ENCODE measurements at regions of chr10 and their contacts with region 1.

Region 1: DNA sequence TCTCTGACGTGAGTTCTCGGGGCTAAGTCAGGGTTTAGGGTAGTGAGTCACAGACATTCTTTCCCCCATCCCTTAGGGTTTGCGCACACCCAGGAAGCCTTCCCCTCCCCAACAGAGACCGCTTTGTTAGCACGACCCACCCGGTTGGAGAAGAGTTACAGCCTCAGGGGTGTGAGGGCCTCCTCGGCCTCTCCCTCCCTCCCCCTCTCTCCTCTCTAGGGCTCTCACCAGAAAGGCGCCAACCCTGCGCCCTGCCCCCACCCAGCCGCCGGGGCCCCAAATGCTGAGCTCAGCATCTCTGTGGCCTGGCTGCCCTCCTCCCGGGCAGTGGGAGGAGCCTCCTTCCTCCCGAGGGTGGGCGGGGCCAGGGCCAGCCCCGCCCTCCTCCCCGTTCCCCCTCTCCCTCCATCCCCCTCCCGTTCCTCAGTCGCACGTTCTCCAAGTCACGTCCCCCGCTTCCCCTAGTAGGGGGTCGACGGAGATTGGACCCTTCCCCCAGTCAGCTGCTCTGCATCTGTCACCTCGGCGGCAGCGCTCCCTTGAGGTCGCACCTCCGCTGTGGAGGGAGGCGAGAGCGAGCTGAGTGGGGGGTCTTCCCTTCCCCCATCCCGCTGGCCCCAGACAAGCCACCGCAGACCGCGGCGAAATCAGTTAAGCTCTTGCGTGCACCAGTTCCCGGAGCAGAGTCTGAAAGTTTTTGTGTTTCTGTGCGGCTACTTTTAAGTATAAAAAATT is 13.0 kb upstream of the DDIT4 start:
- DNase-seq: peak; percentile 88
- ATAC-seq: peak; percentile 80
- H3K4me3 ChIP-seq: peak overlapping the region; percentile 68
- H3K27ac ChIP-seq: peak overlapping the region; percentile 95
- H3K4me1 ChIP-seq: peaks cover 68% of the 10 kb centered on the region
- H3K27me3 ChIP-seq: no peaks in the 10 kb centered on the region
- CTCF ChIP-seq: peak in 2 of 3 experiments; percentile 15 to 39; a peak in 2 of 6 replicates
- EP300 ChIP-seq: no peak; a peak in 2 of 4 replicates
- POLR2A ChIP-seq: peak; percentile 77
- RAD21 ChIP-seq: peak; percentile 9; the same call in 1 of the 2 replicates

Region 2: GRCh38 chr10:72126184-72126871 is 134.4 kb before region 1 on chr10:
- CTCF ChIA-PET with region 1: interaction called, 10 read pairs
- POLR2A ChIA-PET with region 1: interaction called, 5 read pairs
- RAD21 ChIA-PET with region 1: interaction called, 46 read pairs
- SMC1A ChIA-PET with region 1: interaction called, 4 read pairs
- in situ Hi-C with region 1: no loop called
- intact Hi-C with region 1: no loop called
- DNase-seq: no peak
- ATAC-seq: peak; percentile 42
- H3K4me3 ChIP-seq: no peak overlapping the region
- H3K27ac ChIP-seq: no peak overlapping the region
- H3K4me1 ChIP-seq: no peaks in the 10 kb centered on the region
- H3K27me3 ChIP-seq: no peaks in the 10 kb centered on the region
- CTCF ChIP-seq: peak; percentile 13 to 46 (median 28); a peak in 4 of 6 replicates
- EP300 ChIP-seq: no peak
- POLR2A ChIP-seq: no peak
- RAD21 ChIP-seq: peak; percentile 57

Region 3: DNA sequence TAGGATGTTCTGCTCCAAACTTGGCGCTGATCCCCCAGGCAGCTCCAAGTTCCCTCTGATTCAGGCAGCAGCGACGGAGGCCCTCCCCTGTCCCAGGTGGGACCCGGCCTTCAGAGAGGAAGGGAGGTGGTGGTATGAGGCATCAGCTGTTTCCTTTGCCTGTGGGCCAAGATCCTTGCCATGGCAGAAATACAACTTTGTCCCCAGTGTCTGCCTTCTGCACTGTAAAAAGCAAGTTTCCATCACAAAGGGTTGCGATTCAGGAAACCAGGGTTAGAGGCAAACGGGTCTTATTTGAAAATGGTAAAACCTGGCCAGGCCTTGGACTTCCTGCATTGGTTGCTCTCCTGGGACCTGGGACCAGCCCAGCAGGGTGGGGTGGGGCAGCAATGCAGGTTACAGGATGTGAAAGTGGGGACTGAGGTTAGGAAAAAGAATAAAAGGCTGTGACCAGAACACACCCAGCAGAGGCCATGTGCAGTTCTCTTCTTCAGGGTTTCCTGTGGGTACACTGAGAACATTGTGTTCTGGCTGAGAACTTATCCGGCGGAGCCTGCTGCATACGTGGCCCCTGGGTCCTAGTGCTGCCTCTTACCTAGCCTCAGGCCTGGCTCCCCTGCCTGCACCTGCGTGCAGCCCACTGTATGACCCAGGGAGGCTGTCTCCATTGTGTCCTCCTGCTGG is 12.1 kb before region 1 on chr10:
- CTCF ChIA-PET with region 1: interaction called, 14 read pairs
- POLR2A ChIA-PET with region 1: interaction called, 113 read pairs
- RAD21 ChIA-PET with region 1: interaction called, 185 read pairs
- SMC1A ChIA-PET with region 1: interaction called, 115 read pairs
- in situ Hi-C with region 1: no loop called
- intact Hi-C with region 1: loop called (anchors 1 kb)
- DNase-seq: peak; percentile 99
- ATAC-seq: peak; percentile 95
- H3K4me3 ChIP-seq: peak overlapping the region; percentile 55; the same call in 1 of the 2 replicates
- H3K27ac ChIP-seq: peak overlapping the region; percentile 97
- H3K4me1 ChIP-seq: peaks cover 72% of the 10 kb centered on the region
- H3K27me3 ChIP-seq: no peaks in the 10 kb centered on the region
- CTCF ChIP-seq: no peak
- EP300 ChIP-seq: peak; percentile 88 to 91
- POLR2A ChIP-seq: peak; percentile 89
- RAD21 ChIP-seq: no peak

Region 4: GRCh38 chr10:72292223-72292691 is 31.5 kb after region 1 on chr10:
- CTCF ChIA-PET with region 1: interaction called, 5 read pairs
- POLR2A ChIA-PET with region 1: interaction called, 84 read pairs
- RAD21 ChIA-PET with region 1: interaction called, 61 read pairs
- SMC1A ChIA-PET with region 1: interaction called, 15 read pairs
- in situ Hi-C with region 1: no loop called
- intact Hi-C with region 1: loop called (anchors 1 kb)
- DNase-seq: no peak
- ATAC-seq: peak; percentile 8; the same call in 2 of the 3 replicates
- H3K4me3 ChIP-seq: no peak overlapping the region
- H3K27ac ChIP-seq: peak overlapping the region; percentile 54
- H3K4me1 ChIP-seq: peaks cover 49% of the 10 kb centered on the region
- H3K27me3 ChIP-seq: no peaks in the 10 kb centered on the region
- CTCF ChIP-seq: no peak
- EP300 ChIP-seq: no peak
- POLR2A ChIP-seq: no peak
- RAD21 ChIP-seq: no peak

Region 5: DNA sequence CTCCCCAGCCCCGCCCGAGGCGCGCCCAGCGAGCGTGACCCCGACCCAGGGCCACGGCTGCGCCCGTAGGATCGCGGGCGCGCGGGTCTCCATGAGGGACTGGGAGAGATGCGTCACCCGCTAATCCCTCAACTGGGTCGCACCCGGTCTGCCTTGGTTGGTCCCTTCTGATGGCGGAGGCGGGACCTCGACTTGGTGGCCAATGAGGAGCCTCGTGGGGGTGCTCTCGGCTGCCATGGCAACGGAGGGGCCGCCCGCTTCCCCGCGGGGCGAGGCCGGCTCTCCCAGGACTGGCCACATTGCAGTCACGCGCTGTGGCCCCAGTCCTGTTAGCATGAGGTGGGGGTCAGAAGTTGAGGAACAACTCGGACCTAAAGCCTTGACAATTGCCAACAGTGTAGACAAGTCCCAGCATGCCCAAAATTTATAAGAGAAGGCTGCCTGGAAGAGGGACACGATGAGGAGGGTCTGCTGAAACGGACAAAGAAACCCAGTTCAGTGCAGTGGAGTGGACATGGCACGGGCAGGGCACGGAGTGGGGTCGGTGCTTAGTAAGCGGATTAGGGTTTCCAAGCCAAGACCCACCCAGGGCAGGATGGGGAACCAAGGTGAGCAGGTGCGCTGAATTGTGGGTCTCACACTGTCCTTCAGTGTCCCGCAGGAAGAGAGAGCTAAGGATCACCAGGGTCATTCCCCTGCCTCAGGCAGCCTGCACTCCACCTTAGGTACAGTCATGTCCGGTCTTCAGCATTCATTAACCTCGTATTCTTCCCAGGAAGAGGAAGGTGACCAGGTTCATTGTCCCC is 37.4 kb after region 1 on chr10:
- CTCF ChIA-PET with region 1: interaction called, 5 read pairs
- POLR2A ChIA-PET with region 1: interaction called, 84 read pairs
- RAD21 ChIA-PET with region 1: interaction called, 61 read pairs
- SMC1A ChIA-PET with region 1: interaction called, 15 read pairs
- in situ Hi-C with region 1: no loop called
- intact Hi-C with region 1: loop called (anchors 1 kb)
- DNase-seq: peak; percentile 91
- ATAC-seq: peak; percentile 84
- H3K4me3 ChIP-seq: peak overlapping the region; percentile 80
- H3K27ac ChIP-seq: peak overlapping the region; percentile 100
- H3K4me1 ChIP-seq: peaks cover 40% of the 10 kb centered on the region
- H3K27me3 ChIP-seq: no peaks in the 10 kb centered on the region
- CTCF ChIP-seq: no peak
- EP300 ChIP-seq: peak in 1 of 2 experiments; percentile 24; a peak in 1 of 4 replicates
- POLR2A ChIP-seq: peak; percentile 83
- RAD21 ChIP-seq: no peak

Region 6: DNA sequence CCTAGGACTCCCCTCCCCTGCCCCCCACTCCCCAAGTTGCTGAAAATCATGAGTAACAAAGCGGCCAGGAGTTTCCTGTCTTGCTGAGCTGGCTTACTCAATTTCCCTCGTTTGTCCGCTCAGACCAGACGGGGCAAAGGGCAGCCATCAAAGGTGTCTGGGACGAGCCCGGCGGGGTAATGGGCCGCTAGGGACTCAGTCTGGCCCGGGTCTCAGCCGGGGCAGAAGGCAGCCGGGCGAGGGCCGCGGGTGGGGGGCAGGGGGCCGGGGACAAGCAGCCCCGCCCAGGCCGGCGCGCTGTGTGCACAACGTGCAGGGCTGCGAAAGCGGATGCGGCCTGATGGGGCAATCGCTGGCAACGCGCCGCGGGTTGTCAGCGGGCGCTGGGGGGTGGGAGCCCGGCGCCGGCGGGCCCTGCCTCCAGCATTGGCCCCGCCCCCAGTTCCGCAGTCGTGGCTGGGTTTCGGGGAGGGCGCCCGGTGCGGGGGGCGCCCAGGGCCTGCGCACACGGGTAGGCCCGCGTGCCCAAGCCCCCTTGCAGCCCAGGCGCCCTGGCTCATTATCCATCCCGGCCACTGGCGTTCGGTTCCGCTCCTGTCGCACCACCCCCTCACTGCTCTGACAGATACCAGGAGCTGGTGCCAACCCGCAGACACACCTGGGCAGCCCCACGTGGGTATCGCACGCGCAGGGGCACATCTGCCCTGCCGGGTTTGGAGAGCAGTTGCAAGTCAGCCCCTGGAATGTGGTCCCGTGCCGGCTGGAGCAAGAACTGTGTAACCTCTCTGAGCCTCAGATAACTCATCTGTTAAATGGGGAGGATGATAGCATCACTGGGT is 58.9 kb after region 1 on chr10:
- CTCF ChIA-PET with region 1: interaction called, 13 read pairs
- POLR2A ChIA-PET with region 1: interaction called, 80 read pairs
- RAD21 ChIA-PET with region 1: interaction called, 73 read pairs
- SMC1A ChIA-PET with region 1: interaction called, 22 read pairs
- in situ Hi-C with region 1: no loop called
- intact Hi-C with region 1: loop called (anchors 2 kb)
- DNase-seq: no peak
- ATAC-seq: peak; percentile 81
- H3K4me3 ChIP-seq: peak overlapping the region; percentile 76
- H3K27ac ChIP-seq: peak overlapping the region; percentile 89
- H3K4me1 ChIP-seq: peaks cover 59% of the 10 kb centered on the region
- H3K27me3 ChIP-seq: no peaks in the 10 kb centered on the region
- CTCF ChIP-seq: no peak
- EP300 ChIP-seq: 0 out of 4 replicates have a peak, but pooled peaks of 1 of the 2 experiments have one; percentile 59
- POLR2A ChIP-seq: peak; percentile 84
- RAD21 ChIP-seq: no peak